OCI-LY7 (cell line): ENCODE measurements at regions of chr1 and their contacts with region 1.

Region 1: DNA sequence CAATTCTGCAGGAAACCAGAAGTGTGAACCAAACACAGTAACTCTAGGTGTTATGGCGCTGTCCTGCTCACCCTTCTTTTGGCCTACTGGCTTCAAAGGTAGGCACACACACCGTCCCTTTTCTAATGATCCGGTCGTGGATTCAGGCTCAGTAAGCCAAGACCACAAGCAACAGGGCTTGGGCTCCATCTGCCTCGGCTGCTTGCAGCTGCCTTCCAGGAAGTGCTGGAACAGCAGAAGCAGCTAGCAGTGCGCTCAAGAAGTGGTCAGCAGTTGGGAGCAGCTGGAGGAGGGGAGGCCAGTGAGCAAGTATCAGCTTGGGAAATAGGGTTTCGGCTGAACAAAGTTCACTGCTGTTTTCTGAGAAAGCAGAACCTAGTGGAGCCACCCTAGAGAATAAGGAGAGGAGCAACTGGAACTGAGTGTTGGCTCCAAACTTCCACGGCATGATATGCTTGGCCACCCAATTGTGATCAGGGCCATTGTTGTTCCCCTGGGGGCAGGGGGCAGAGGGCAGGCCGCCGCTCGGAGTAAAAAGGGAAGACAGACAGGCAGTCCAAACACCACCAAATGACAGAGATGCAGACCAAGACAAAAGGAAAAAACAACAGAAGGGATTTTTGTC is 173.4 kb downstream of the TOMM20 start:
- DNase-seq: peak; percentile 44
- H3K4me3 ChIP-seq: peak overlapping the region; percentile 25
- H3K27ac ChIP-seq: peak overlapping the region; percentile 37
- H3K4me1 ChIP-seq: peaks cover 65% of the 10 kb centered on the region
- CTCF ChIP-seq: no peak

Region 2: GRCh38 chr1:234638832-234639799 is 316.1 kb before region 1 on chr1:
- CTCF ChIA-PET with region 1: no interaction called
- POLR2A ChIA-PET with region 1: no interaction called
- intact Hi-C with region 1: no loop called
- DNase-seq: no peak
- H3K4me3 ChIP-seq: no peak overlapping the region
- H3K27ac ChIP-seq: no peak overlapping the region
- H3K4me1 ChIP-seq: no peaks in the 10 kb centered on the region
- CTCF ChIP-seq: no peak

Region 3: DNA sequence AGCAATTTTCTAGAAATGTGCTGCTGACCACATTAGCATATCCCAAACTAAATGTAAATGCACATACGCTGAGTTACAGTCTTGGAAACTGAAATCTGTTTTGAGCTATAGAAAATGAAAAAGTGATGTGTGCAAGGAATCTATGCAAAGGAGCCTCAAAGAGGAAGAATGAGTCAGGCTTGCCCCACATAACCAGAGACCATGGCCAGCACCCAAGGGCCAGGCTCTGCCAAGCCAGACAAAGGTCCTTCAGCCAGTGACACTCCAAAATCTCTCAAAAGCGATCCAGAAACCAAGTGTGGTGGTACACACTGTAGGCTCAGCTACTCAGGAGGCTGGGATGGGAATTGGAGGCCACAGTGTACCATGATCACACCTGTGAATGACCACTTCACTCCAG is 21.7 kb before region 1 on chr1:
- CTCF ChIA-PET with region 1: no interaction called
- POLR2A ChIA-PET with region 1: interaction called, 14 read pairs
- intact Hi-C with region 1: no loop called
- DNase-seq: peak; percentile 31
- H3K4me3 ChIP-seq: no peak overlapping the region
- H3K27ac ChIP-seq: no peak overlapping the region
- H3K4me1 ChIP-seq: peaks cover 24% of the 10 kb centered on the region
- CTCF ChIP-seq: no peak

Region 4: DNA sequence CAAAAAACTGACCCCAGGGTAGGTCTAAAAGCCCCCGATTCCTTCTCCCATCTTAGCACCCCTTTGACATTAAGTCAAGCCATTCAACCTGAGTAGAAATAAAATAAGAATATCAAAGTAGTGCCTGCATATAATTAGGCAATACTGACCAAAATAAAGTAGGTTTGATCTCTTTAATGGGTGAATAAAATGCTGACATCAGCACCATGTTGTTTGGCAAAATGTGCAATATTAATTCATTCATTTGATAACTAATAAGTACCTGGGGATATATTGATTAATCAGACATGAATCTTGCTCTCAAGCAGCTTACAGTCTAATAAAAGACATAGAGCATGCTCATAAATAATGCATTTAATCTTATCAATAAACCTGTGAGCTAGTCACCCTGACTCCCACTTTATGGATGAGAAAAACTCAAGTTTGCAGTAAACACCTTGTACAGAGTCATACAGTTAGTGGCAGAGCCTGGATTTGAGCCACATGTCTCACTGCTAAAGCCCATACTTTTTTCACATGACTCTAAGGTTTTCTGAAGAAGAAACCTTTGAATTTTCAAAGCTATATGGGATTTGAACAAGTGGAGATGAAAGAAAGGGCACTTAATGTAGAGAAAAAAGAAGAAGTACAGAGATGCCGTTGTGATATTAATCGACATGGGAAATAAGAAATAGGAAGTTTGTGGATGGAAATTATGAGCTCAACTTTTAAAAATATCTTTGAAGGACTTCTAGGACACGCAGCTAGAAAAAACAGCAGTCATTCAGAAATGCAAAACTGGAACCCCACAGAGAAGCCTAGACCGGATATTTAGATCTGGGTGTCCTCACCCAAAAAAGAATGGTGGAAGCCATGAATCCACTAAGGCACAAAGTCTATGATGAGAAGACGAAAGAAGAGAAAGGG is 10.5 kb before region 1 on chr1:
- CTCF ChIA-PET with region 1: no interaction called
- POLR2A ChIA-PET with region 1: interaction called, 18 read pairs
- intact Hi-C with region 1: no loop called
- DNase-seq: peak; percentile 40
- H3K4me3 ChIP-seq: no peak overlapping the region
- H3K27ac ChIP-seq: no peak overlapping the region
- H3K4me1 ChIP-seq: peaks cover 19% of the 10 kb centered on the region
- CTCF ChIP-seq: no peak